AG04450 (cell line): ENCODE measurements at regions of chr11 and their contacts with region 1.

Region 1: DNA sequence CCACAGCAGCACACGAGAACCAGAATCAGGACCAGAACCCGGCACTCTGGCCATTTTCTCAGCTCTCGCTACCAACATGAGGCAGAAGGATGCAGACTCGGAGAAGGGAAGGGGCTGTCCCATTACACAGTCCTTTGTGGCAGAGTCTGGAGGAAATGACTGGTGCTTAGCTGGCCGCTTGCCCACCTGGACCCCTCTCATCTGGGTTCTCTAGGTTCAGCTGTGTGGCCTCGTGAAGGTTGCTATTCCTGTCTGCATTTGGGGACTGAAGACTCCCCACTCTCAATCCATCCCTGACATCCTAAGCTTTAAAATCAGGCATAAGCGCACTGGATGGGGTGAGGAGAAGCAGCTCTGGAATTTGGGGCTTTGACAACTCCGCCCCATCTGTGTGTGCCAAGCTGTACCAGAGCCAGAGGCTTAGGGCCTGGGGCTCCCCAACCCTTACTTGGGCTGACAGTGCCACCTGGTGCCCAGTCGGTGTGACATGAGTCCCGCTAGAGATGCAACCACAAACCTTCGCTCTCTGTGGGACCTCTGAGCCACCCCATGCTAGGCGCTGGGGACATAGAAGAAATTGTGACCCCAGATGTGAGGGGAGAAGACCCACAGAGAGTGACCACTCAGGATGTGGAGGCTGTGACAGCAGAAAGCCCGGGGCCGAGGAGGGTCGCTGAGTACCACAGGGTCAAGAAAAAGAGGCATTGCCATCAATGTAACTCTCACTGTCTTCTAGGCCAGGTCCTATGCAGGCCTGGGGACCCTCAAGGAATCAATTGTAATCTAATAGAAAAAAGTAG is 35.9 kb upstream of the FCHSD2 start:
- DNase-seq: peak; percentile 60
- H3K4me3 ChIP-seq: no peak overlapping the region
- H3K27ac ChIP-seq: no peak overlapping the region
- H3K27me3 ChIP-seq: peaks cover 9% of the 10 kb centered on the region
- CTCF ChIP-seq: peak; percentile 80

Region 2: DNA sequence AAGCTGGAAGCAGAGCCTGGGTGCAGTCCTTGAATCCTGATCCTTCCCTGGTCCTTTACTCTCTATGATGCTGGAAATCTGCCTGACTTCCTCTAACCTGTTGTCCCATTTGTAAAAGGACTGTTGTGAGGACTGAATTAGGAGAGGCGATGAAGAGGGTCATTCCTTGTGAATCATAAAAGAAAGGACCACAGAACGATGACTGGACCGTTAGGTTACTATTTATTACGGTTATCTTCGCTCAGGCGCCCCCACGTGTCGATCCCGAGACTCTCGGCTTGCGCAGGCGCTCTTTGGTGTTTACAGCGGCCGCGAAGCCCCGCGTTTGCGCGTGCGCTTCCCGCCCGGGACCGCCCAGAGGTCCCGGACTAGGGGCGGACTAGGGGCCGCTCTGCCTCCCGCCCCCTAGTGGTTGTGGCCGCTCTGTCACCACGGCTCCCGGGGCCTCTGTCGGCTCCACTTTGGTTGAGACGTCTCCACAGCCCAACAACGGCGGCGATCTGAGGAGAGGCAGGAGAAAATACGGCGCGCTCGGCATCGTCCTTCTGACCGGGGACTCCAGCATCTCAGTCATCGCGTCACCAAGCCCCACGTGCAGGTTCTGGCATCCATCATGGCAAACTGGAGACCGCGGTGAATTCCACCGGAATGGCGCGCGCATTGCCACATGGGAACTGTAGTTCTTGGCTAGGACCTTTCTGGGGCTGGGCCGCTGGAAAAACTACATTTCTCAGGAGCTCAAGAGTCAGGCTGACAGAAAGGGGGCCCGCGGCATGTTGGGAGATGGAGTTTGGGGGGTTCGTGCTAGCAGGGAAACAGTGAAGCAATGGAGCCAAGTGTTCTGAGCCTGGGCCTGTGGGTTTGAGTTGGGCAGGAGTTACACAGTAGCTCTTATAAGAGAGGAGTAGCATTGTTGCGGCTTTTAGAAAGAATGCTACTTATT is 384.3 kb before region 1 on chr11 and contains the start of gene STARD10:
- CTCF ChIA-PET with region 1: interaction called, 10 read pairs
- POLR2A ChIA-PET with region 1: no interaction called
- DNase-seq: peak; percentile 89
- H3K4me3 ChIP-seq: peak within 1 kb of the TSS; percentile 75
- H3K27ac ChIP-seq: peak within 1 kb of the TSS; percentile 96
- H3K27me3 ChIP-seq: no peaks in the 10 kb centered on the region
- CTCF ChIP-seq: peak; percentile 94
- polyA plus RNA-seq, gene STARD10: 38.4 and 49.0 TPM in 2 replicates

Region 3: DNA sequence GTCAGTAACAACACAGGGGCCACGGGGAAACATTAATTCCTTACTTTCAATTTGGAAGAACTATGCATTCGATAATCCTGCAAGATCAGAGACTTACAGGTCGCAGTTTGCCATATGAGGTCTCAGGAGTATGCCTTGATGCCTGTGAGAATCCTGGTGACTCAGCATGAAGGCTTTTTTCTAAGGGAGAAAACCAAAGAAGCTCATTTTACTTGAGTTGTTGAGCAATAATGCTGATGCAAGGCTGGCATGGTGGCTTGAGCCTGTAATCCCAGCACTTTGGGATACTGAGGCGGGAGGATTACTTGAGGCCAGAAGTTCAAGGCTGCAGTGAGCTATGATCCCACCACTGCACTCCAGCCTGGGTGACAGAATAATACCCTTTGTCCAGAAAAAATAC is 337.2 kb before region 1 on chr11:
- CTCF ChIA-PET with region 1: interaction called, 25 read pairs
- POLR2A ChIA-PET with region 1: no interaction called
- DNase-seq: peak; percentile 79
- H3K4me3 ChIP-seq: no peak overlapping the region
- H3K27ac ChIP-seq: peak overlapping the region; percentile 75
- H3K27me3 ChIP-seq: no peaks in the 10 kb centered on the region
- CTCF ChIP-seq: no peak

Region 4: DNA sequence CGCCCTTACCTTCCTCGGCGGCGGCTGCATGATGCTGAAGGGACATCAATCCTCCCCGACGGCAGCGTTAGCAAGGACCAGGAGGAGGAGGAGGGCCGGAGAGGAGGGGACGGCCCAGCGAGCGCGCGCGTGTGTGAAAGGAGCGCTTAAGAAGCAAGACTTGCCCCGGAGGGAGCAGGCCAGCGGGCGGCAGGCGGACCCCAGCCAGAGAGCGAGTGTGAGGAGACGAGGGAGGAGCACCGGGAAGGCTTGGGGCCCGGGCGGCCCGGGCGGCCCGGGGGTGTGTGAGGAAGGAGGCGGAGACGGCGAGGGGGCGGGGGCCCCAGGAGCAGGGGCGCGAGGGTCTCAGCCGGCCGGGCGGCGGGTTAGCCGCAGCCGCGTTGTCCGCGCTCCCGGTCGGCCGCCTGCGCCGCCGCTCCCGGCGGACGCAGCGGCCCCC is 36.1 kb before region 1 on chr11:
- CTCF ChIA-PET with region 1: interaction called, 29 read pairs
- POLR2A ChIA-PET with region 1: interaction called, 7 read pairs
- DNase-seq: no peak
- H3K4me3 ChIP-seq: peak overlapping the region; percentile 92
- H3K27ac ChIP-seq: peak overlapping the region; percentile 77
- H3K27me3 ChIP-seq: no peaks in the 10 kb centered on the region
- CTCF ChIP-seq: no peak

Region 5: GRCh38 chr11:73242251-73243079 is 64.5 kb after region 1 on chr11:
- CTCF ChIA-PET with region 1: interaction called, 11 read pairs
- POLR2A ChIA-PET with region 1: no interaction called
- DNase-seq: peak; percentile 26
- H3K4me3 ChIP-seq: peak overlapping the region; percentile 7; the same call in 1 of the 2 replicates
- H3K27ac ChIP-seq: no peak overlapping the region
- H3K27me3 ChIP-seq: no peaks in the 10 kb centered on the region
- CTCF ChIP-seq: peak; percentile 97